Breast epithelium (tissue), 4 donors: ENCODE measurements at regions of chr1 and their contacts with region 1.

Region 1: DNA sequence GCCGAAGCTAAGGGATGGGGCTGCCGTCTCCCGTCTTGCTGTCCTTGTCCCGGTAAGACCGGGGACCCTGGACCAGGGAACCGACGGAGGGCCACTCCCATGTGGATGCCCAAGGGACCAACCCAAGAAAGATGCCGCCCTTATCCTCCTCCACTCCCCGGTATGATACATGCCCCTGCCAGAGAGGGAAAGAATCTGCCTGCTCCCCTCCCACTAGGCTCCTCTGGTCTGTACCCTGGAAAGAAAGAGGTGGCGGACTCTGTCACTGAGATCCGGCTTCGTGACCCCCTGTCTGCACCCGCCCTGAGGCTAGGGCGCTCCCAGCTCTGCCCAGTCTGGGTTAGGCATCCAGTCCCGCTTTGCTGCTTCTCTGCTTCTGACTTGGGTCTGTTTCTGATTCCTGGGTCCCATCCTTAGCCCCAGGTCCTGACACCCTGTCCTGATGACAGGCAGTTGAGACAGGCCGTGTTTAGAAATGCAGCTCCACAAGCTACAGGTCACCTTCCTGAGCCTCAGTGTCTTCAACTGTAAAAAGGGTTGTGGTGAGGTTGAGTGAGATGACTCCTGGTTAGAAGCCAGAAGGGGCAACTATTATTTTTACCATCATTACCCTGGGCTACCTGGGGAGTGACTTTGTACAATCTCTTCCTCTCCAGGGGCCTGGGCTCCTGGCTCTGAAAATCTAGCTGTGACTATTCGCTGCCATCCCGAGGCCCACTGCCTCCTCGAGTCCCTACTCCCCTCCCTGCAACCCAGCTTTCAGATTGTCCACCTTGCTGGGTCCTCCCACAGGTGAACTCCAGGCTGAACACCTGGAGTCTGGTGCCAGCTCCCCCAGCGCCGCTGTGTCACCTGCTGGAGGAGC is 3.7 kb downstream of the MATN1 start:
- DNase-seq: no peak
- H3K4me3 ChIP-seq: peak overlapping the region; percentile 30 to 78 (median 68)
- H3K27ac ChIP-seq: peak overlapping the region; percentile 99 to 100
- H3K4me1 ChIP-seq: no peaks in the 10 kb centered on the region
- H3K27me3 ChIP-seq: no peaks in the 10 kb centered on the region
- CTCF ChIP-seq: no peak
- POLR2A ChIP-seq: no peak

Region 2: GRCh38 chr1:30120245-30121000 is 599.2 kb before region 1 on chr1:
- intact Hi-C with region 1: no loop called
- DNase-seq: no peak
- H3K4me3 ChIP-seq: no peak overlapping the region
- H3K27ac ChIP-seq: no peak overlapping the region
- H3K4me1 ChIP-seq: no peaks in the 10 kb centered on the region
- H3K27me3 ChIP-seq: no peaks in the 10 kb centered on the region
- CTCF ChIP-seq: no peak
- POLR2A ChIP-seq: no peak

Region 3: DNA sequence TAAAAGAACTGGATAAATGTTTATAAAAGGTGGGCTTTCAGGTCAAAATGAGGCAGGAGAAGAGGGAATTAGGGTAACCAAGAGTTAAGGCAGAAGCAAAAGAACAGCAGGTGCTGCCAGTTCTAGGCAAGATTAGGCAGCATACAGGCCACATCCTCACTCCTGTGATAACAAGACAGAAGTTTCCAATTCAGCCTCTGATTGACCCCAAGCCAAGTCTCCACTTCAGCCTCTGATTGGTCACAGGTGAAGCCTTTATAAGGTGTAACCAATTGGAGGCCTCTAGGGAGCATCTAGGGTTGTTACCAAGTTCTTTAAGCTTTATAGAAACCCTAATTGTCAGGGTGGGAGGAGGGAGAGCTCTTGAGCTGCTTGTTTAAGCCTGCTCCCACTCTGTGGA is 157.1 kb before region 1 on chr1:
- intact Hi-C with region 1: no loop called
- DNase-seq: no peak
- H3K4me3 ChIP-seq: no peak overlapping the region
- H3K27ac ChIP-seq: no peak overlapping the region
- H3K4me1 ChIP-seq: no peaks in the 10 kb centered on the region
- H3K27me3 ChIP-seq: no peaks in the 10 kb centered on the region
- CTCF ChIP-seq: no peak
- POLR2A ChIP-seq: no peak

Region 4: GRCh38 chr1:30764939-30765555 is 45.4 kb after region 1 on chr1:
- intact Hi-C with region 1: loop called (anchors 5 kb)
- DNase-seq: no peak
- H3K4me3 ChIP-seq: no peak overlapping the region
- H3K27ac ChIP-seq: no peak overlapping the region
- H3K4me1 ChIP-seq: peaks cover 5 to 9% of the 10 kb centered on the region in 2 donors
- H3K27me3 ChIP-seq: no peaks in the 10 kb centered on the region
- CTCF ChIP-seq: no peak
- POLR2A ChIP-seq: no peak

Region 5: GRCh38 chr1:30929135-30929889 is 209.7 kb after region 1 on chr1:
- intact Hi-C with region 1: no loop called
- DNase-seq: no peak
- H3K4me3 ChIP-seq: no peak overlapping the region
- H3K27ac ChIP-seq: peak overlapping the region; percentile 60 to 77
- H3K4me1 ChIP-seq: no peaks in the 10 kb centered on the region
- H3K27me3 ChIP-seq: no peaks in the 10 kb centered on the region
- CTCF ChIP-seq: peak; percentile 21 to 65 (median 65)
- POLR2A ChIP-seq: no peak